HepG2 (cell line): ENCODE measurements at regions of chrX and their contacts with region 1.

Region 1: GRCh38 chrX:12946838-12947544 is 27.9 kb upstream of the TMSB4X start:
- DNase-seq: peak; percentile 47
- ATAC-seq: peak; percentile 53
- H3K4me3 ChIP-seq: no peak overlapping the region
- H3K27ac ChIP-seq: peak overlapping the region; percentile 71
- H3K4me1 ChIP-seq: peaks cover 49% of the 10 kb centered on the region
- H3K27me3 ChIP-seq: no peaks in the 10 kb centered on the region
- CTCF ChIP-seq: peak; percentile 77
- EP300 ChIP-seq: no peak
- POLR2A ChIP-seq: no peak
- RAD21 ChIP-seq: 0 out of 2 replicates have a peak, but pooled peaks have one; percentile 43

Region 2: GRCh38 chrX:12329476-12329875 is 617.5 kb before region 1 on chrX:
- CTCF ChIA-PET with region 1: no interaction called
- POLR2A ChIA-PET with region 1: no interaction called
- in situ Hi-C with region 1: no loop called
- intact Hi-C with region 1: no loop called
- DNase-seq: no peak
- ATAC-seq: no peak
- H3K4me3 ChIP-seq: no peak overlapping the region
- H3K27ac ChIP-seq: no peak overlapping the region
- H3K4me1 ChIP-seq: no peaks in the 10 kb centered on the region
- H3K27me3 ChIP-seq: no peaks in the 10 kb centered on the region
- CTCF ChIP-seq: no peak
- EP300 ChIP-seq: no peak
- POLR2A ChIP-seq: no peak
- RAD21 ChIP-seq: no peak

Region 3: GRCh38 chrX:13123857-13124345 is 176.9 kb after region 1 on chrX:
- CTCF ChIA-PET with region 1: no interaction called
- POLR2A ChIA-PET with region 1: no interaction called
- in situ Hi-C with region 1: no loop called
- intact Hi-C with region 1: loop called (anchors 1 kb)
- DNase-seq: peak; percentile 46
- ATAC-seq: peak; percentile 67
- H3K4me3 ChIP-seq: peak overlapping the region; percentile 12 to 54 (median 35); a peak in 4 of 6 replicates
- H3K27ac ChIP-seq: peak overlapping the region; percentile 80
- H3K4me1 ChIP-seq: peaks cover 79% of the 10 kb centered on the region
- H3K27me3 ChIP-seq: no peaks in the 10 kb centered on the region
- CTCF ChIP-seq: no peak
- EP300 ChIP-seq: peak in 1 of 2 experiments; percentile 55; a peak in 1 of 4 replicates
- POLR2A ChIP-seq: no peak
- RAD21 ChIP-seq: no peak

Region 4: DNA sequence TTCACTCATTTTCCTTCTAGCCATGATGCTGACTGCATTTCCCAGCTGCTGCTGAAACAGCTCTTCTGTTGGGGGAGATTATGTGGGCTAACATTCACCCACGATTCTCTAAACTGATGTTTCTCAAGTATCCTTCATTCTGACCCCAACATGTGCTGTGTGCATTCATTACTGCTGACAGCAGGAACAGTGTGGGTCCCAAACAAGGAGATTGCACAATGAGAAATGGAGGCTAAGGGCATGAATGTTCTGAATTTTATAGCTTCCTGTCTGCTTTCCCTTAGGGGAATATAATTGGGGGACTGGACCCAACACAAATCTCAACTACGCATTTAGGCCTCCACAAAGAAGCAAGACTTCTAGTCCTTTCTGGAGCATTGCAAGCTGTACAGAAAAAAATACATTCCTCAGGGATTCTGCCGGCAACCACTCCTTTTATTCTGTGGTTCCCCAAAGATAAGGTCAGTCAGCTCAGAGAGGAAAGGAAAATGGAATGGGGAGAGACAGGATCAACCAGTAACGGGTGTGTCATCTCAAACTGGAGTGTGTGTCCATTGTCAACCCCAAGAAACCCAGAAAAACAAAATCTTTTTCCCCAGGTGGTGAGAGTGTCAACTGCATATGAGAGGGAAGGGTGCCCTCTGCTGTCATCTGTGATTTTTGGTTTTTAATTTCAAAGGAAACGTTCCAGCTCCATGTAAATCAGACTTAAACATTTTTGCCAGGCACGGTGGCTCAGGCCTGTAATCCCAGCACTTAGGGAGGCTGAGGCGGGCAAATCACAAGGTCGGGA is 540.9 kb after region 1 on chrX:
- CTCF ChIA-PET with region 1: interaction called, 35 read pairs
- POLR2A ChIA-PET with region 1: interaction called, 3 read pairs
- in situ Hi-C with region 1: loop called (anchors 10 kb)
- intact Hi-C with region 1: loop called (anchors 1 kb)
- DNase-seq: peak; percentile 10
- ATAC-seq: peak; percentile 75
- H3K4me3 ChIP-seq: no peak overlapping the region
- H3K27ac ChIP-seq: no peak overlapping the region
- H3K4me1 ChIP-seq: no peaks in the 10 kb centered on the region
- H3K27me3 ChIP-seq: no peaks in the 10 kb centered on the region
- CTCF ChIP-seq: peak; percentile 66
- EP300 ChIP-seq: no peak
- POLR2A ChIP-seq: no peak
- RAD21 ChIP-seq: peak; percentile 27; the same call in 1 of the 2 replicates

Region 5: DNA sequence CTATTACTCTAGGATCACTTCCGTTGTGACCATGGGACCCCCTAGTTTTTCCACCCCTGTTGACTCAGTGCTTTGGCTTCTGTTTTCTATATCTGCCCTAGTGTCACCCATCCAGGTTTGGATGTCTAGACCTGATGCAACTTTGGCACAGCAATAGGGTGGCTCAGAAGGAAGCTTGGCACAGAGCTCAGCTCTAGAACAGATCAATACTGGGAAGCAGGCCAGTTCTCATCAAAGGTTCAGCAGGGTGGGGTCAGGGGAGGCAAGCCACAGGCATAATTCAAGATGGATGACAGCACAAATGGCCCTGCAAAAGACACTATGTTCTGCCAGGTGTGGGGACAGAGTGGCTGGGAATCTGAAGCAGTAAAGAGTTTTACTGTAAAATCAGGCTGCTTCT is 548.2 kb after region 1 on chrX:
- CTCF ChIA-PET with region 1: no interaction called
- POLR2A ChIA-PET with region 1: no interaction called
- in situ Hi-C with region 1: loop called (anchors 10 kb)
- intact Hi-C with region 1: no loop called
- DNase-seq: no peak
- ATAC-seq: no peak
- H3K4me3 ChIP-seq: no peak overlapping the region
- H3K27ac ChIP-seq: no peak overlapping the region
- H3K4me1 ChIP-seq: no peaks in the 10 kb centered on the region
- H3K27me3 ChIP-seq: no peaks in the 10 kb centered on the region
- CTCF ChIP-seq: no peak
- EP300 ChIP-seq: no peak
- POLR2A ChIP-seq: no peak
- RAD21 ChIP-seq: no peak